Activated CD4-positive, alpha-beta T cell treated with anti-CD3 and anti-CD28 coated beads for 36 hours (primary cell): ENCODE measurements at regions of chr4 and their contacts with region 1.

Region 1: DNA sequence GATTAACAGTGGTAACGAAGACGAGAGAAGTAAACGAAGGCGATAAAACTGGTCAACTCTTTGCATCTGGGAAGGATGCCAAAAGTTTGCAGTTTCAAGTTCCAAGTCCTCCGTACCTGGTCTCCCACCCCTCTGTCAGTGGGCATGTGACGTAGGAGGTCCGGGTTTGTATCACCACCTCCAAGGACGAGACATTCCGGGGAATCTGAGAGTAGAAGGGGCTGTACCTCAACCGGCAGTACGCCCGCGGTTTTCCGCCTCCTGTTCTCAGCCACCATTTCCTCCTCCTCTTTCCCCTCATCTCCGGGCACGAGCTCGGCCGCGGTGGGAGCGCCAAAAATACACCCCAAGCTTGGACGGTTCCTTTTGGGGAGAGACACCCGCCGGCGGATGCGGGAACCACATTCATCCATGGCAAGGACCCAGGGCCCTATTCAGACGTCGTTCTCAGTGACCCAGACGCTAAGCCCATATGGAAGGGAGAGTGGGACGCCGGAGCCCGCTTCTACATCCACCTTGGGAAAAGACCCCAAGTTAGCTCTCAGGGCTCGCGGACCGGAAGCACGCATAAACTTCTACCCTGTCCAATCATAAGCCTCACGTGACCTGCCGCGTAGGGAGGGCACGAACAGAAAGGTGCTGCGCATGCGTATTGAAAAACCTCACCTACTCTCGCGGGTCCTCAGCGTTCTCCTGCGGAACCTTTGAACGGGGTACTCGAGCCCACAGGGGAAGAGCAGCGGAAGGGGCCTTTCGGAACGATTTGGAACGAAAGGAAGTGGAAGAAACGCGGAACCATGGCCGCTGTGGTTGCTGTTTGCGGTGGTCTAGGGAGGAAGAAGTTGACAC is at the starts of genes HELQ and MRPS18C:
- DNase-seq: peak; percentile 97
- ATAC-seq: peak; percentile 92
- H3K4me3 Mint-ChIP-seq: peak within 1 kb of the TSS; percentile 97
- H3K27ac Mint-ChIP-seq: peak within 1 kb of the TSS; percentile 99
- H3K4me1 Mint-ChIP-seq: peaks cover 37% of the 10 kb centered on the region
- H3K27me3 Mint-ChIP-seq: no peaks in the 10 kb centered on the region
- total RNA-seq, gene HELQ: 9.3 to 10.1 TPM
- total RNA-seq, gene MRPS18C: 78.0 to 89.5 TPM

Region 2: GRCh38 chr4:82373816-82374625 is 1081.5 kb before region 1 on chr4 and contains the start of gene HNRNPD:
- CTCF ChIA-PET with region 1: no interaction called
- POLR2A ChIA-PET with region 1: no interaction called
- intact Hi-C with region 1: loop called in 1 of 2 experiments (anchors 1 kb)
- DNase-seq: peak; percentile 97
- ATAC-seq: peak; percentile 90
- H3K4me3 Mint-ChIP-seq: peak within 1 kb of the TSS; percentile 89
- H3K27ac Mint-ChIP-seq: peak within 1 kb of the TSS; percentile 99
- H3K4me1 Mint-ChIP-seq: peaks cover 34% of the 10 kb centered on the region
- H3K27me3 Mint-ChIP-seq: no peaks in the 10 kb centered on the region
- total RNA-seq, gene HNRNPD: 505 to 510 TPM

Region 3: GRCh38 chr4:83034630-83035494 is 420.6 kb before region 1 on chr4 and contains the start of gene COPS4:
- CTCF ChIA-PET with region 1: no interaction called
- POLR2A ChIA-PET with region 1: interaction called, 3 read pairs
- intact Hi-C with region 1: loop called in 1 of 2 experiments (anchors 1 kb)
- DNase-seq: peak; percentile 97
- ATAC-seq: peak; percentile 97
- H3K4me3 Mint-ChIP-seq: peak within 1 kb of the TSS; percentile 91
- H3K27ac Mint-ChIP-seq: peak within 1 kb of the TSS; percentile 94
- H3K4me1 Mint-ChIP-seq: peaks cover 22% of the 10 kb centered on the region
- H3K27me3 Mint-ChIP-seq: no peaks in the 10 kb centered on the region
- total RNA-seq, gene COPS4: 35.7 to 35.9 TPM

Region 4: GRCh38 chr4:83334425-83335241 is 120.9 kb before region 1 on chr4 and contains the start of gene HPSE:
- CTCF ChIA-PET with region 1: no interaction called
- POLR2A ChIA-PET with region 1: no interaction called
- intact Hi-C with region 1: loop called in 1 of 2 experiments (anchors 1 kb)
- DNase-seq: peak; percentile 80
- ATAC-seq: peak; percentile 90
- H3K4me3 Mint-ChIP-seq: peak within 1 kb of the TSS; percentile 81
- H3K27ac Mint-ChIP-seq: peak within 1 kb of the TSS; percentile 87
- H3K4me1 Mint-ChIP-seq: peaks cover 15% of the 10 kb centered on the region
- H3K27me3 Mint-ChIP-seq: peaks cover 13% of the 10 kb centered on the region
- total RNA-seq, gene HPSE: 11.4 TPM

Region 5: GRCh38 chr4:83484500-83485461 is 29.3 kb after region 1 on chr4 and contains the start of gene ABRAXAS1:
- CTCF ChIA-PET with region 1: interaction called, 4 read pairs
- POLR2A ChIA-PET with region 1: no interaction called
- intact Hi-C with region 1: loop called (anchors 1 kb)
- DNase-seq: peak; percentile 97
- ATAC-seq: peak; percentile 95
- H3K4me3 Mint-ChIP-seq: peak within 1 kb of the TSS; percentile 91
- H3K27ac Mint-ChIP-seq: peak within 1 kb of the TSS; percentile 94
- H3K4me1 Mint-ChIP-seq: peaks cover 10% of the 10 kb centered on the region
- H3K27me3 Mint-ChIP-seq: no peaks in the 10 kb centered on the region
- total RNA-seq, gene ABRAXAS1: 19.2 to 22.6 TPM